ENCODE measurements at regions of chr15 and their contacts with region 1.

Region 1: DNA sequence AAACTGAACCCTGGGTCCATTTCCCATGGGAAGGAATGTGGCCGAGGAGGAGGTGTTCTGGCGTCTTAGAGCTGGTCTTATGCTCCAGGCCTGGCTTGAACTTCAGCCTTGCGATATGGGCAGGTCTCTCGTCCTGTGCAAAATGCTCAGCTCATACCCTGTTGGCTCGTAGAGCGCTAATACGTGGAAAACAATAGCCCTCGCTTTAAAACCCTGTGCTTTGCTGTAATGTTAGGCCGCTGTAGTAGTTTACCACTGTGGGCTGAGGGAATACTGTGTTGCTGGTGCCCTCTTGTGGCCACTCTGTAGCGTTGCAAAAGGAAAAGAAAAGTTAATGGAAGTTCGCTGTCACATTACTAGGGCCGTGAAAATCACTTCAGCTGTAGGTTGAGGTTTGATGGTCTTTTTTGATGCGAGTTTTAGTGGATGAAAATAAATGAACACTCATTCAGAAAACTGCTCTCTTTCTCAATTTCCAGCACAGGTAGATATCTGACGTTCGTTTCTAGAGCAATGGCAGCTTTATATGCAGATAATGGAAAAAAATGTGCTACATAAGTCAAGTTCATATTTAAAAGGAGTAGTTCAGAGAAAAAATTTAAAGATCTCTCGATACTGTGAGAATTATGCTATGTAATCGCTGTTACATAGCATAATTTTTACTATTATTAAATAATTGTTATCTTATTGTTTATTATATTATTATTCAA is 92.9 kb downstream of the MCTP2 start:
- DNase-seq: peak in 2 of 5 donors; percentile 20 to 48
- ATAC-seq: peak; percentile 81 to 92 (median 86)
- H3K4me3 ChIP-seq: no peak overlapping the region
- H3K27ac ChIP-seq: no peak overlapping the region
- H3K4me1 ChIP-seq: peaks cover 0 to 14% (median 0%) of the 10 kb centered on the region in 12 donors
- H3K27me3 ChIP-seq: no peaks in the 10 kb centered on the region
- CTCF ChIP-seq: peak; percentile 75 to 97 (median 89)
- POLR2A ChIP-seq: no peak

Region 2: GRCh38 chr15:94163999-94164807 is 160.1 kb before region 1 on chr15:
- intact Hi-C with region 1: loop called (anchors 1 to 5 kb)
- DNase-seq: peak in 4 of 5 donors; percentile 29 to 43 (median 37)
- ATAC-seq: peak in 1 of 4 donors; percentile 55
- H3K4me3 ChIP-seq: no peak overlapping the region
- H3K27ac ChIP-seq: no peak overlapping the region
- H3K4me1 ChIP-seq: no peaks in the 10 kb centered on the region
- H3K27me3 ChIP-seq: peaks cover 0 to 8% (median 0%) of the 10 kb centered on the region in 9 donors
- CTCF ChIP-seq: peak; percentile 59 to 88 (median 74)
- POLR2A ChIP-seq: no peak